Endothelial cell of umbilical vein (primary cell): ENCODE measurements at regions of chr6 and their contacts with region 1.

Region 1: DNA sequence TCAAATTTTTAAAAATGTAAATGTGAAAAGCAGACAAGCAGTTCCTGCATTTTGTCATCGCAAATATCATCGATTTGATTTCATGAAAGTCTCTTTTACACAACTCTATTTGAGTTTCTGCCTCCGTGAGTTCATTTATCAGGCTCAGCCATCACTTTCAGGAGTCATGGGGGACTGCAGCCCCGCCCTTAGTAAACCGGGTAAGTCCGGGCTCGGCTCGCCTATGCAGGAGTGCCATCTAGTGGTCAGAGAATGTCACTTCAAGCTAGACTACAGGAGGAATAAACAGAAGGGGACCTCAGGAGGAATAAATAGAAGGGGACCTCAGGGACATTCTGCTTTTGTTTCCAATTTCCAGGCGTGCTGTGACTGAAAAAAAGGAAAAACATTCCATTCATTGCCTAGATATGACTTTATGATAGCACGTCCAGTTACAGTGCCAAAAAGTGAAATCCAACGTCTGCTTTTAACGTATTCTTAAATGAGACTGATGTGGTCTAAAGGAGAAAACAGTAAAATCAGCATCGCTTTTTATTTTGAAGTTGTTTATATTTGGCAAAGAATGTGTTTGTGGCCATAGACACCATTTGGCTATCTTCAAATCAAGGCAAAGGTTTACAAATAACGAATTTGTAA is 333.9 kb downstream of the HACE1 start:
- DNase-seq: peak; percentile 82
- H3K4me3 ChIP-seq: peak overlapping the region in 2 of 3 experiments; percentile 24 to 62
- H3K27ac ChIP-seq: peak overlapping the region; percentile 62
- H3K4me1 ChIP-seq: peaks cover 27% of the 10 kb centered on the region
- H3K27me3 ChIP-seq: no peaks in the 10 kb centered on the region
- CTCF ChIP-seq: peak; percentile 79 to 82
- POLR2A ChIP-seq: no peak

Region 2: DNA sequence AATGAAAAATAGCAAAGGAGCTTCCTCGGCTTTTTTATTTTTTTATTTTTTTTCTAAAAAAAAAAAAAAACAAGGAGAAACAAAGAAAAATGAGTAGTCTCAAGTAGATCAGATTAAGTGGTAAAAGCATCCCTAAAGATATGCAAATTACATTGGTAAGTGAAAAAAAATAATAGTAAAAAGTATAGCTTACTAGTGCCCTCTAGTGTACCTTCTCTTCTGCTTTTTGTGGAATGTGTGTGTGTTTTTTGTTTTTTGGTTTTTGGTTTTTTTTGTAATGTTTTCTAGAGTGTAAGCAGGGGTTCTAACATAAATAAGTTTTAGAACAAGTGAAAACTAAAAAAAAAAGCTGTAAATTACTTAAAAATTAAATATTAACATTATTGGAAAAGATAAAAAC is 728.1 kb before region 1 on chr6:
- CTCF ChIA-PET with region 1: interaction called, 5 read pairs
- POLR2A ChIA-PET with region 1: no interaction called
- dilution Hi-C with region 1: no loop called
- intact Hi-C with region 1: loop called (anchors 2 kb)
- DNase-seq: peak; percentile 7
- H3K4me3 ChIP-seq: no peak overlapping the region
- H3K27ac ChIP-seq: no peak overlapping the region
- H3K4me1 ChIP-seq: no peaks in the 10 kb centered on the region
- H3K27me3 ChIP-seq: no peaks in the 10 kb centered on the region
- CTCF ChIP-seq: peak; percentile 12 to 36
- POLR2A ChIP-seq: no peak

Region 3: DNA sequence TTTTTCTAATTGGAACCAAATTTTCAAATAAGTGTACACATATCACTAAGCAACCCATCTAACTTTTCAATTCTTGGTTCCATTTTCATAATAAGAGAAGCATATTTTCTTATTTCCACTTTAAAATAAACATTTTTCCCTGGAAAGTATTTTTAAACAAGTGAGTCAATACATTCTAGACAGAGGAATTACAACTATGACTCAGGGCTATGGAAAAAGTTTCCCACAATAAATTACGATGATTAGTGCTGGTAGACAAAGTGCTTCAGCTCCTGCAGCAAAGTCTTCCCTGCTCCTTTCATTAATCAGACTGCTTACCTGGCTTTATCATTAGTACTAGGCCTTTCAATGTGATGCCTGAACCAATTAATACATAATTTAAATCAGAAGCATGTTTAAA is 11.4 kb after region 1 on chr6:
- CTCF ChIA-PET with region 1: interaction called, 27 read pairs
- POLR2A ChIA-PET with region 1: no interaction called
- dilution Hi-C with region 1: no loop called
- intact Hi-C with region 1: no loop called
- DNase-seq: peak; percentile 62
- H3K4me3 ChIP-seq: no peak overlapping the region
- H3K27ac ChIP-seq: no peak overlapping the region
- H3K4me1 ChIP-seq: no peaks in the 10 kb centered on the region
- H3K27me3 ChIP-seq: no peaks in the 10 kb centered on the region
- CTCF ChIP-seq: no peak
- POLR2A ChIP-seq: no peak

Region 4: GRCh38 chr6:104669483-104669882 is 143.7 kb after region 1 on chr6:
- CTCF ChIA-PET with region 1: no interaction called
- POLR2A ChIA-PET with region 1: no interaction called
- dilution Hi-C with region 1: no loop called
- intact Hi-C with region 1: no loop called
- DNase-seq: no peak
- H3K4me3 ChIP-seq: no peak overlapping the region
- H3K27ac ChIP-seq: no peak overlapping the region
- H3K4me1 ChIP-seq: no peaks in the 10 kb centered on the region
- H3K27me3 ChIP-seq: no peaks in the 10 kb centered on the region
- CTCF ChIP-seq: no peak
- POLR2A ChIP-seq: no peak

Region 5: DNA sequence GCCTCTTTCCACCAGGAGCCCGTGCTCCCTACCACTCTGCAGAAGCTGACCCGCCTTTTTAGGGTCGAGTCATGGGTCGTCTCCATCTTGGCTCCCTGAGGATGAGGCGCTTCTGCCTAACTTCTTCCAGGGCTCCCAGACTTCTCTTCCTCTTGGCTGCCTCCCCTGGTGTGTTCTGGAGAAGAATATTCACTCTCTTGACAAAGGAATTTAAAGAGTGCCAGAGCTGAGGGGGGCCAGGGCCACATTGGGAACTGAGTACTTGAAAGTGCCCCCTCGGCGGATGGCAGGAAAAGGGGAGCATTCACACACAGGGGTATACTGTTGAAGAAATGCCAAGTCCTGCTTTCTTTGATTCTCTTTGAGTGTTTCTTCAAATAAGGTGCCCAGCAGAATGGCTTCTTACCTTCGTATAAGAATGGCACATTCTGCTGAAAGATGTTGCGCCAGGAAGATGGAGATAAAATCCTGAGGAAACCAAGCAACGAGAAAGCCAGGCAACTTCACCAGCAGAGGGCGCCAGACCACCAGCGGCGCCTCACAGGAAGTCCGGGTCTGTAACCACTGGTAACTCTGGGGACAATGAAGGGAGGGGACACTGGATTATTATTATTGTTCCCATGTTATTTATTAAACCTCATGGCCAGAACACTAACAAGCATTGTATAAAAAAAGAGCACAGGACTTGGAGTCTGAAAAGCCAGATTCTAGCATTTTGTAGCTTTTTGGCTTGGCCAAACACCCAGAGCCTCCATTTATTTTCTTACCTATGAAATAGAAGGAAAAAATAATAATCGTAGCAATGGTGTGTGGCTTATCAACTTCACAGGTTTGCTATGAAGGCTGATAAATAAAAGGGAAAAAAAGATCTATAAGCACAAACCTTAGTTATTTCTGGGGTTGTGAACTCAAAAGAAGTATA is 157.2 kb after region 1 on chr6:
- CTCF ChIA-PET with region 1: interaction called, 7 read pairs
- POLR2A ChIA-PET with region 1: no interaction called
- dilution Hi-C with region 1: no loop called
- intact Hi-C with region 1: loop called (anchors 1 kb)
- DNase-seq: peak; percentile 56
- H3K4me3 ChIP-seq: no peak overlapping the region
- H3K27ac ChIP-seq: peak overlapping the region; percentile 17
- H3K4me1 ChIP-seq: no peaks in the 10 kb centered on the region
- H3K27me3 ChIP-seq: no peaks in the 10 kb centered on the region
- CTCF ChIP-seq: peak; percentile 78 to 86
- POLR2A ChIP-seq: no peak

Region 6: GRCh38 chr6:104771258-104771832 is 245.6 kb after region 1 on chr6:
- CTCF ChIA-PET with region 1: interaction called, 19 read pairs
- POLR2A ChIA-PET with region 1: no interaction called
- dilution Hi-C with region 1: no loop called
- intact Hi-C with region 1: loop called (anchors 1 kb)
- DNase-seq: peak; percentile 51
- H3K4me3 ChIP-seq: no peak overlapping the region
- H3K27ac ChIP-seq: no peak overlapping the region
- H3K4me1 ChIP-seq: peaks cover 7% of the 10 kb centered on the region
- H3K27me3 ChIP-seq: no peaks in the 10 kb centered on the region
- CTCF ChIP-seq: peak; percentile 14 to 33
- POLR2A ChIP-seq: no peak